Head of caudate nucleus (tissue), 42 donors: ENCODE measurements at regions of chr6 and their contacts with region 1.

Region 1: DNA sequence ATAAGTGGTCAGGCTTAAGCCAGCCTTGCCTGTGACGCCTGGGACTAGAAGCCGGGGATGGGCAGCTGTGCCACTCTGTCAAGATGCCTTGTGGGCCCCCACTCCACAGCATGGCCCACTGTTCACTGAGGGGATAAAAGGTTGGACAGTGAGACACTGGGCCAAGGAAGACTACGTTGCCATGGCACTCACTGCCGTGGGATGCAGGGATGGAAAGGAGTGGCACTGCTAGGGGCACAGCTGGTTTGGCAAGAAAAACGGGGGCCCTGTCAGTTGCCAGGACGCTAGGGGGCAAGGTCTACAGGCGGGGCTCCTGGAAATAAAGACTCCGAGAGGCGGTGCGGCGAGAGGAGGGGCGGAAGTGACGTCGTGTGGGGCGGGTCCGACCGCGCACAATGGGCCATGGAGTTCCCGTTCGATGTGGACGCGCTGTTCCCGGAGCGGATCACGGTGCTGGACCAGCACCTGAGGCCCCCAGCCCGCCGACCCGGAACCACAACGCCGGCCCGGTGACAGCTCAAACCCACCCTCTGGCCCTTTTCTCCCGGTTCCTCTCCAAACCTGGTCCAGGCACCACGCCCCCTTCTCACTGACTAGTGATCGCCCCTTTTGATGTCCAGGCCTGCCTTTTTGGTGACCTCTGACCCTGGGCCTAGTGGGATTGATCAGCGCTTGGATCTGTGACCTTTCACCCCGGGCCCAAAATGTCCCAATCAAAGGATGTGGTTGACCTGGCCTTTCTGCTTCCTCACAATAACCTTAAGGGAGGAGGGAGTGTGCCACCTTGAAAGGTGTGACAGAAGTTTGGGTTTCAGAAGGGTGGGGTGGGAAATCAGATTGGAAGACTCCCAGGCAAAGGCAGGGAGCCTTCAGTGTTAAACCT is at the start of gene ATAT1:
- DNase-seq: peak; percentile 91 to 97 (median 95)

Region 2: GRCh38 chr6:30657454-30657853 is 30.7 kb after region 1 on chr6:
- intact Hi-C with region 1: no loop called
- DNase-seq: peak in 21 of 42 donors; percentile 27 to 80 (median 51)

Region 3: GRCh38 chr6:30672445-30673253 is 45.9 kb after region 1 on chr6 and contains the start of gene DHX16:
- intact Hi-C with region 1: loop called (anchors 10 kb)
- DNase-seq: peak; percentile 79 to 97 (median 92)

Region 4: DNA sequence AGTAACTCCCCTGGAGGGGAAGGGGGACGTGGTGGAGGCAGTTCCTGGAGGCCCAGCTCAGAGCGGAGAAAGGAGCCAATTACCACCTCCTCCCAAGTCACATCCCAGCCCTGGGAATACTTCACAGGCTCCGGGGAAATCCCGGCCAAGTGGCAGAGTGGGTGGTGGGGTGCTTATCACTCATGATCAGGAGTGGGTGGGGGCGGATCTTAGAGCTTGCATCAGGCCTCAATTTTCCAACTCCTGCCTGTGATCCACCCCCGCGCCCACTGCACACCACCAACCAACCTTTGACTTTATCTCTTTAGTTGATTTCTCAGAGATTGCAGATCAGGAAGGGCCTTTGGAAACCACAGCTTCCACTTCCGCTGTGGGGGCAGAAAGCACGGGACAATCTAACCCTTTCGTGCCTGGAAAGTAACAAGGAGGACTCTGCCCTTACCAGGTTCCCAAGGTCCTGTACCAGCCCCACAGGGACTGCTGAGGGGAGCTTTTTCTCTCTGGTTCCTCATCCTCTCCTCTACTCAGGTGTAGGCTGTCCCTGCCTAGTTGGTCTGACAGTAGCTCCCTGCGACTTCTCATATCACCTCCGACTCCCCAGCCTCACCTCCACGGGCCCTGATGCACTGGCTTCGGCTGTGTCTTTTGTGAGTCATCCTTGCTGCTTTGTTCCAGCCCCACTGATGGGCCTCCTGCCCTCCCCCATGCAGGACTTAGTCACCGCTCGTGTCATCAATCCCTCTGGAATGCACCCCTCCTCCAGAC is 142.5 kb after region 1 on chr6:
- intact Hi-C with region 1: no loop called
- DNase-seq: peak; percentile 46 to 93 (median 77)